ENCODE measurements at regions of chr12 and their contacts with region 1.

Region 1: DNA sequence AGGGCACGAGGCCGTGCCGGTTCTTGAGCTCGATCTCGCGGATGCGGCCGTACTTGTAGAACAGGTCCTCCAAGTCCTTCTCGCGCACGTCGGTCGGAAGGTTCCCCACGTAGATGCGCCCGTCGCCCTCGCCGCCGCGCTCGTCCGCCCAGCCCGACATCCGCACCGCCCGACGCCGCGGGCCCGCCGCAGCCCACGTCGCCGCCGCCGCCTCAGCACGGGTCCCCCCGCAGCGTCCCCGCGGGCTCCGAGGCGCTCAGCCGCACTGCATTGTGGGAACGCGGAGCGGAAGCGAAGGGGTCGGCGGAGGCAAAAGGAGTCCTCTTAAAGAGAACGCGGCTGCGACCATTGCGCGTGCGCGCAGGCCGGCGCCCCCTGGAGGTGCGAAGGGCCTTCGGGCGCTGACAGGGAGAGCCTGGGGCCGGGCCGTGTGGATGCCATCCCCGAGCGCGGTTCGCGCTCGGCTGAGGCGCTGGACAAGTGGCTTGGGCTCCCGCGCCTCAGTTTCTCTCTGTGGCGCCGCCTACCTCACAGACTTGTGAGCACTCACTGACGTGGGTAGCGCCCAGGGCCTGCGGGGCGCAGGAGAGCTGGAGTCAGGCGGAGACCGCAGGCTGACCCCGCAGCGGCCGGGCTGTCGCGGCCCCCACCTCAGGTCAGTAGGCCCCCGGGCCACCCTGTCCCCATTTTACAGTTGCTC is at the start of gene SRSF9:
- DNase-seq: peak; percentile 95
- H3K4me3 Mint-ChIP-seq: peak within 1 kb of the TSS; percentile 88
- H3K27ac Mint-ChIP-seq: peak within 1 kb of the TSS; percentile 75
- H3K4me1 Mint-ChIP-seq: peaks cover 19% of the 10 kb centered on the region
- H3K27me3 Mint-ChIP-seq: no peaks in the 10 kb centered on the region
- CTCF ChIP-seq: peak; percentile 93
- total RNA-seq, gene SRSF9: 192 and 193 TPM in 2 replicates

Region 2: GRCh38 chr12:120356567-120357030 is 113.0 kb before region 1 on chr12:
- CTCF ChIA-PET with region 1: interaction called, 9 read pairs
- POLR2A ChIA-PET with region 1: interaction called, 4 read pairs
- intact Hi-C with region 1: loop called (anchors 1 kb)
- DNase-seq: peak; percentile 88
- H3K4me3 Mint-ChIP-seq: peak overlapping the region; percentile 24
- H3K27ac Mint-ChIP-seq: no peak overlapping the region
- H3K4me1 Mint-ChIP-seq: no peaks in the 10 kb centered on the region
- H3K27me3 Mint-ChIP-seq: peaks cover 11% of the 10 kb centered on the region
- CTCF ChIP-seq: peak; percentile 82

Region 3: GRCh38 chr12:120445911-120446843 is 23.4 kb before region 1 on chr12 and contains the starts of genes GATC and TRIAP1:
- CTCF ChIA-PET with region 1: interaction called, 40 read pairs
- POLR2A ChIA-PET with region 1: interaction called, 32 read pairs
- intact Hi-C with region 1: no loop called
- DNase-seq: peak; percentile 77
- H3K4me3 Mint-ChIP-seq: peak within 1 kb of the TSS; percentile 100
- H3K27ac Mint-ChIP-seq: peak within 1 kb of the TSS; percentile 98
- H3K4me1 Mint-ChIP-seq: peaks cover 7% of the 10 kb centered on the region
- H3K27me3 Mint-ChIP-seq: no peaks in the 10 kb centered on the region
- CTCF ChIP-seq: no peak
- total RNA-seq, gene GATC: 29.7 and 32.1 TPM in 2 replicates
- total RNA-seq, gene TRIAP1: 48.4 and 50.2 TPM in 2 replicates

Region 4: GRCh38 chr12:120495723-120496412 is 26.3 kb after region 1 on chr12 and contains the start of gene DYNLL1:
- CTCF ChIA-PET with region 1: interaction called, 15 read pairs
- POLR2A ChIA-PET with region 1: interaction called, 56 read pairs
- intact Hi-C with region 1: loop called (anchors 1 kb)
- DNase-seq: peak; percentile 97
- H3K4me3 Mint-ChIP-seq: peak within 1 kb of the TSS; percentile 88
- H3K27ac Mint-ChIP-seq: peak within 1 kb of the TSS; percentile 86
- H3K4me1 Mint-ChIP-seq: peaks cover 16% of the 10 kb centered on the region
- H3K27me3 Mint-ChIP-seq: no peaks in the 10 kb centered on the region
- CTCF ChIP-seq: no peak
- total RNA-seq, gene DYNLL1: 247 and 351 TPM in 2 replicates